ENCODE measurements at regions of chr2 and their contacts with region 1.

Region 1: GRCh38 chr2:197152451-197153228 is 157.9 kb downstream of the ANKRD44 start:
- DNase-seq: peak; percentile 89
- ATAC-seq: peak; percentile 87
- H3K4me3 ChIP-seq: peak overlapping the region; percentile 4 to 40 (median 29)
- H3K4me3 Mint-ChIP-seq: peak overlapping the region; percentile 74
- H3K27ac ChIP-seq: peak overlapping the region; percentile 93
- H3K27ac Mint-ChIP-seq: peak overlapping the region; percentile 90
- H3K4me1 ChIP-seq: peaks cover 81 to 88% of the 10 kb centered on the region in 2 donors
- H3K4me1 Mint-ChIP-seq: peaks cover 79% of the 10 kb centered on the region
- H3K27me3 ChIP-seq: no peaks in the 10 kb centered on the region
- H3K27me3 Mint-ChIP-seq: no peaks in the 10 kb centered on the region
- CTCF ChIP-seq: peak; percentile 69

Region 2: GRCh38 chr2:196535742-196536141 is 616.9 kb before region 1 on chr2:
- CTCF ChIA-PET with region 1: no interaction called
- POLR2A ChIA-PET with region 1: no interaction called
- intact Hi-C with region 1: no loop called
- DNase-seq: no peak
- ATAC-seq: no peak
- H3K4me3 ChIP-seq: no peak overlapping the region
- H3K4me3 Mint-ChIP-seq: no peak overlapping the region
- H3K27ac ChIP-seq: no peak overlapping the region
- H3K27ac Mint-ChIP-seq: no peak overlapping the region
- H3K4me1 ChIP-seq: no peaks in the 10 kb centered on the region
- H3K4me1 Mint-ChIP-seq: no peaks in the 10 kb centered on the region
- H3K27me3 ChIP-seq: no peaks in the 10 kb centered on the region
- H3K27me3 Mint-ChIP-seq: peaks cover 9% of the 10 kb centered on the region
- CTCF ChIP-seq: no peak

Region 3: GRCh38 chr2:197130318-197130717 is 22.3 kb before region 1 on chr2:
- CTCF ChIA-PET with region 1: interaction called, 21 read pairs
- POLR2A ChIA-PET with region 1: interaction called, 9 read pairs
- intact Hi-C with region 1: loop called (anchors 1 kb)
- DNase-seq: peak; percentile 75
- ATAC-seq: peak; percentile 70
- H3K4me3 ChIP-seq: peak overlapping the region in 3 of 5 experiments; percentile 14 to 52 (median 21)
- H3K4me3 Mint-ChIP-seq: peak overlapping the region; percentile 84
- H3K27ac ChIP-seq: peak overlapping the region; percentile 81 to 82
- H3K27ac Mint-ChIP-seq: peak overlapping the region; percentile 96
- H3K4me1 ChIP-seq: peaks cover 66 to 69% of the 10 kb centered on the region in 2 donors
- H3K4me1 Mint-ChIP-seq: peaks cover 69% of the 10 kb centered on the region
- H3K27me3 ChIP-seq: no peaks in the 10 kb centered on the region
- H3K27me3 Mint-ChIP-seq: no peaks in the 10 kb centered on the region
- CTCF ChIP-seq: no peak

Region 4: GRCh38 chr2:197137231-197137630 is 15.4 kb before region 1 on chr2:
- CTCF ChIA-PET with region 1: interaction called, 21 read pairs
- POLR2A ChIA-PET with region 1: interaction called, 9 read pairs
- intact Hi-C with region 1: no loop called
- DNase-seq: no peak
- ATAC-seq: no peak
- H3K4me3 ChIP-seq: no peak overlapping the region
- H3K4me3 Mint-ChIP-seq: peak overlapping the region; percentile 32
- H3K27ac ChIP-seq: peak overlapping the region; percentile 31 to 82
- H3K27ac Mint-ChIP-seq: peak overlapping the region; percentile 89
- H3K4me1 ChIP-seq: peaks cover 83 to 85% of the 10 kb centered on the region in 2 donors
- H3K4me1 Mint-ChIP-seq: peaks cover 85% of the 10 kb centered on the region
- H3K27me3 ChIP-seq: no peaks in the 10 kb centered on the region
- H3K27me3 Mint-ChIP-seq: no peaks in the 10 kb centered on the region
- CTCF ChIP-seq: no peak

Region 5: GRCh38 chr2:197198890-197199289 is 46.2 kb after region 1 on chr2:
- CTCF ChIA-PET with region 1: interaction called, 6 read pairs
- POLR2A ChIA-PET with region 1: no interaction called
- intact Hi-C with region 1: loop called (anchors 2 kb)
- DNase-seq: peak; percentile 93
- ATAC-seq: peak; percentile 96
- H3K4me3 ChIP-seq: peak overlapping the region; percentile 30 to 60 (median 57)
- H3K4me3 Mint-ChIP-seq: peak overlapping the region; percentile 93
- H3K27ac ChIP-seq: peak overlapping the region; percentile 68 to 86
- H3K27ac Mint-ChIP-seq: peak overlapping the region; percentile 97
- H3K4me1 ChIP-seq: peaks cover 68 to 71% of the 10 kb centered on the region in 2 donors
- H3K4me1 Mint-ChIP-seq: peaks cover 84% of the 10 kb centered on the region
- H3K27me3 ChIP-seq: no peaks in the 10 kb centered on the region
- H3K27me3 Mint-ChIP-seq: no peaks in the 10 kb centered on the region
- CTCF ChIP-seq: no peak

Region 6: GRCh38 chr2:197209742-197210408 is 57.2 kb after region 1 on chr2:
- CTCF ChIA-PET with region 1: interaction called, 7 read pairs
- POLR2A ChIA-PET with region 1: no interaction called
- intact Hi-C with region 1: loop called (anchors 5 kb)
- DNase-seq: peak; percentile 74
- ATAC-seq: peak; percentile 37
- H3K4me3 ChIP-seq: peak overlapping the region in 3 of 5 experiments; percentile 10 to 27 (median 21)
- H3K4me3 Mint-ChIP-seq: peak overlapping the region; percentile 84
- H3K27ac ChIP-seq: peak overlapping the region; percentile 94 to 95
- H3K27ac Mint-ChIP-seq: peak overlapping the region; percentile 99
- H3K4me1 ChIP-seq: peaks cover 92 to 99% of the 10 kb centered on the region in 2 donors
- H3K4me1 Mint-ChIP-seq: peaks cover 96% of the 10 kb centered on the region
- H3K27me3 ChIP-seq: no peaks in the 10 kb centered on the region
- H3K27me3 Mint-ChIP-seq: no peaks in the 10 kb centered on the region
- CTCF ChIP-seq: no peak

Region 7: DNA sequence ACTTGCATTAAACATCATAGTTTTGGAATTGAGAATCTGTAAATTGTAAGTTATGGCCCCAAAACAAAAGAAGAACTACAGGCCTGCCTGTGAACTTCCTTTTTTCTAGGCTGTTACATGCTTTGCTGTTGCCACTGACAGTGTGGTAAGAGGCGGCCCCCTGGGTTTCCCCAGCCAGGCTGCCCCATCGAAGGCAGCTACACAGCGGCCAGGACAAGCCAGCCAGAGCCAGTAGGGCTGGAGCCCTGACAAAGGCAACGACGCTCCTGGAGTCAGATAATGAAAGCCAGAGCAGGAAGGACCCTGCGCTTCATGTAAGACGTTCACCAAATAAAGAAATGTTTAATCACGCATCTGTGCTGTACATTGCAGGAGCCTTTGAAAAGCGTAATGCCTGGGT is 102.9 kb after region 1 on chr2:
- CTCF ChIA-PET with region 1: interaction called, 3 read pairs
- POLR2A ChIA-PET with region 1: no interaction called
- intact Hi-C with region 1: loop called (anchors 2 kb)
- DNase-seq: peak; percentile 91
- ATAC-seq: peak; percentile 97
- H3K4me3 ChIP-seq: peak overlapping the region; percentile 18 to 84 (median 49)
- H3K4me3 Mint-ChIP-seq: peak overlapping the region; percentile 87
- H3K27ac ChIP-seq: peak overlapping the region; percentile 90 to 93
- H3K27ac Mint-ChIP-seq: peak overlapping the region; percentile 90
- H3K4me1 ChIP-seq: peaks cover 69 to 74% of the 10 kb centered on the region in 2 donors
- H3K4me1 Mint-ChIP-seq: peaks cover 74% of the 10 kb centered on the region
- H3K27me3 ChIP-seq: no peaks in the 10 kb centered on the region
- H3K27me3 Mint-ChIP-seq: no peaks in the 10 kb centered on the region
- CTCF ChIP-seq: no peak

Measured in B cell (primary cell).